Right ventricle myocardium superior (tissue), 1 donor: ENCODE measurements at regions of chr6 and their contacts with region 1.

Region 1: GRCh38 chr6:8219352-8219943 is 117.1 kb upstream of the EEF1E1 start:
- DNase-seq: no peak
- ATAC-seq: peak; percentile 58

Region 2: DNA sequence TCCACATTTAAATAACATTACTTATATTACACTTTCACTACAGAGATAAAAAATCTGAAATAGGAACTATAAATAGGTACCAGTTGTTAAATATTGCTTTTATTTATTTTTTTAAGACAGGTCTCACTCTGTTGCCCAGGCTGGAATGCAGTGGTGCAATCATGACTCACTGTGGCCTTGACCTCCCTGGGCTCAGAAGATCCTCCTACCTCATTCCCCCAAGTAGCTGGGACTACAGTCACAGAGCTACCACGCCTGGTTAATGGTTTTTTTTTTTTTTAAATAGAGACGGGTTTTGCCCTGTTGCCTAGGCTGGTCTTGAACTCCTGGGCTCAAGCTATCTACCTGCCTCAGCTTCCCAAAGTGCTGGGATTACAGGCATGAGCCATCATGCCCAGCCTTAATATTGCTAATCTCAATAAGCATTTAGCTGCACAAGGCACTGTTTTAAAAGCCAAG is 134.4 kb before region 1 on chr6:
- intact Hi-C with region 1: no loop called
- DNase-seq: no peak
- ATAC-seq: no peak

Region 3: GRCh38 chr6:8131256-8131897 is 88.1 kb before region 1 on chr6:
- intact Hi-C with region 1: loop called (anchors 2 kb)
- DNase-seq: no peak
- ATAC-seq: peak; percentile 78